BJ (cell line): ENCODE measurements at regions of chr9 and their contacts with region 1.

Region 1: DNA sequence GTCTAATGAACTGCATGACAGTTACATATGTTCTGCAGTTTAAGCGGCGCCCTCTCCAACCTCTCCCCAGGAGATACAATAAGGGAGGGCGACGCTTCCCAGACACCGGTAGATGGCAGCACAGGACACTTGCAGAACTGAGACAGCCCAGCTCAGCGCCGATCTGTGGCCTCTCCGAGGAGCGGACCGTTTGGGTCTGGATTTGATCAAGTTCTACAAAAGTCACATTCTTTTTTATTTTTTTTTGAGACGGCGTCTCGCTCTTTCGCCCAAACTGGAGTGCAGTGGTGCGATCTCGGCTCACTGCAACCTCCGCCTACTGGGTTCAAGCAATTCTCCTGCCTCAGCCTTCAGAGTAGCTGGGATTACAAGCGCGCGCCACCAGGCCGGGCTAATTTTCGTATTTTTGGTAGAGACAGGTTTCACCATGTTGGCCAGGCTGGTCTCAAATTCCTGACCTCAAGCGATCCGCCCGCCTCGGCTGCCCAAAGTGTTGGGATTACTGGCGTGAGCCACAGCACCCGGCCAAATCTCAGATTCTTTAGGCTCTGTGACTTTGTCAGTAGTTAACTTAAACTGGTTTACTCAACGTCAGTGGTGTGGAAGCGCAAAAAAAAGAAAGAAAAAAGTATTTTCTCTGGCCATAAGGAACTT is 1.4 kb upstream of the ATOSB start:
- DNase-seq: peak; percentile 64
- H3K4me3 ChIP-seq: peak overlapping the region; percentile 62
- H3K27me3 ChIP-seq: no peaks in the 10 kb centered on the region
- CTCF ChIP-seq: peak; percentile 93

Region 2: DNA sequence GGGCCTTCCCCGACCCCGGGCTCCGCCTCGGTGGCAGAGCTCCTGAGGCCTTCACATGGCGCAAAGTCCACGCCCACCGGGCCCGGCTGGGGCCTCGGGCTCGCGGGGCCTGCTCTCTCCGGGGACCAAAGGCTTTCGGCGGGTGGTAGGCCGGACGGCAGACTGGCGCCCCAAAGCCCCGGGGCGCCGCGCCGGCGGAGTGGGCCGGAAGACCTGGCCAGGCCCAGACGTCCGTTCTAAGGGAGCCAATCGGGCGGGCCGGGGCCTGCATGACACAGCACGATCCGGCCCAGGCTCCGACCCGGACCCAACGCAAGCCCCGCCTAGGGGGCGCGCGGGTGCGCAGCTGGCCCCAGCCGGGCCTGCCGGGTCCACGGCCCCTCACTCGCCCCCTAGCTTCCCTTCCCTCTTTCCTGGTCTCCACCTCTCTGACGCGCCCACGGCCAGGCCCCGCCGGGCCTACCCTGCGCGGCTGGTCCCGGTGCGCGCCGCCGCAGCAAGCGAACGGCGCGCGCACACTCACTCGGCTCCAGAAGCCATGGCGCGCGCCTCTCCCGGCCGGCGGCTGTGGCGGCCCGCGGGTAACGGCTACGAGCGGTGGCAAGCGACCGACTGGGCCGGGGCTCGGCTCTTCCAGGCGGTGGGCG is 45.1 kb before region 1 on chr9:
- CTCF ChIA-PET with region 1: no interaction called
- POLR2A ChIA-PET with region 1: no interaction called
- DNase-seq: no peak
- H3K4me3 ChIP-seq: peak overlapping the region; percentile 65
- H3K27me3 ChIP-seq: no peaks in the 10 kb centered on the region
- CTCF ChIP-seq: peak; percentile 24; the same call in 1 of the 2 replicates

Region 3: GRCh38 chr9:35258676-35259474 is 141.8 kb after region 1 on chr9:
- CTCF ChIA-PET with region 1: interaction called, 17 read pairs
- POLR2A ChIA-PET with region 1: no interaction called
- DNase-seq: peak; percentile 39
- H3K4me3 ChIP-seq: no peak overlapping the region
- H3K27me3 ChIP-seq: no peaks in the 10 kb centered on the region
- CTCF ChIP-seq: peak; percentile 82

Region 4: DNA sequence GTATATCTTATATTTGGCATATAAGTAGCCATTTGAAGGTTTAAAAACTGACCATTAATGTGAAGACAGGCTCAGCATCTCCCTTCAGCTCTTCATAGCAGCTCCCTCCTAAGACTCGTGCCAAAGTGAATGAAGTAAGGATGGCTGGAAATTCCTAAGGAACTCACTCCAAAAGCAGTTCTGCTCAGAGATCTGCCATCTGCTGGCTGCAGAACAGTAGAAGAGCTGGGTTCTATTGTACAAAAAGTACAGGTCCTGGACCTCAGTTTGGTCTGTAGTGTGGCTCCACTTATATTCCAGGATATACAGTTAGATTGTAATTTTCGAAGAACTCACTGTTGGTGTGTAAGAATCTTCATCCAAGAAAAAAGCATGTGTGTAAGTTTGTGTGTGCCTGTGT is 268.0 kb after region 1 on chr9:
- CTCF ChIA-PET with region 1: interaction called, 25 read pairs
- POLR2A ChIA-PET with region 1: interaction called, 4 read pairs
- DNase-seq: peak; percentile 7
- H3K4me3 ChIP-seq: no peak overlapping the region
- H3K27me3 ChIP-seq: no peaks in the 10 kb centered on the region
- CTCF ChIP-seq: peak; percentile 74

Region 5: GRCh38 chr9:35481347-35481975 is 364.4 kb after region 1 on chr9:
- CTCF ChIA-PET with region 1: interaction called, 29 read pairs
- POLR2A ChIA-PET with region 1: interaction called, 3 read pairs
- DNase-seq: no peak
- H3K4me3 ChIP-seq: no peak overlapping the region
- H3K27me3 ChIP-seq: no peaks in the 10 kb centered on the region
- CTCF ChIP-seq: peak; percentile 87